ENCODE measurements at regions of chr3 and their contacts with region 1.

Region 1: DNA sequence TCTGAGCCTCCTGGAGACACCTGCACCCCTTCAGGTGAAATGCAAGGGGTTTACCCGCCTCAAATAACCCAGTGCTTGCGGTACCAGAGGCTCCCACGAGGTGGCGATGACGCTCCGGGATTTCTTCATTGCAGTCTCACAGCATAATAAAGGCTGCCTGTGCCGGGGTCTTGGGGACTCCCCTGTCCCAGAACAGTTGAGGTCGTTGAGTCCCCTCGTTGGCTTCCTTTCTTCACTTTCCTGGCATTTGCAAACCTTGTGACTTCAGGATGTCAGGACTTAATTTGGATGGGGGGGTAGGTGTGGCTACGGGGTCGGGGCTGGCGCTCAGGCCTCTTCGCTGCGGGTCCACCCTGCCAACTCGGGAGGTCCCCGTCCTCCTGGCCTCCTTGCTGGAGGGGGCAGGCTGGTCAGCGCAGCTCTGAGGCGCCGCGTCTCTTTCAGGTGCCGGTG is 1.3 kb downstream of the GNAT1 start:
- DNase-seq: peak; percentile 71 to 87
- H3K4me3 ChIP-seq: no peak overlapping the region
- H3K4me3 Mint-ChIP-seq: no peak overlapping the region
- H3K27ac Mint-ChIP-seq: no peak overlapping the region
- H3K4me1 ChIP-seq: peaks cover 20% of the 10 kb centered on the region
- H3K4me1 Mint-ChIP-seq: no peaks in the 10 kb centered on the region
- H3K27me3 ChIP-seq: no peaks in the 10 kb centered on the region
- H3K27me3 Mint-ChIP-seq: no peaks in the 10 kb centered on the region
- CTCF ChIP-seq: peak; percentile 82 to 91

Region 2: DNA sequence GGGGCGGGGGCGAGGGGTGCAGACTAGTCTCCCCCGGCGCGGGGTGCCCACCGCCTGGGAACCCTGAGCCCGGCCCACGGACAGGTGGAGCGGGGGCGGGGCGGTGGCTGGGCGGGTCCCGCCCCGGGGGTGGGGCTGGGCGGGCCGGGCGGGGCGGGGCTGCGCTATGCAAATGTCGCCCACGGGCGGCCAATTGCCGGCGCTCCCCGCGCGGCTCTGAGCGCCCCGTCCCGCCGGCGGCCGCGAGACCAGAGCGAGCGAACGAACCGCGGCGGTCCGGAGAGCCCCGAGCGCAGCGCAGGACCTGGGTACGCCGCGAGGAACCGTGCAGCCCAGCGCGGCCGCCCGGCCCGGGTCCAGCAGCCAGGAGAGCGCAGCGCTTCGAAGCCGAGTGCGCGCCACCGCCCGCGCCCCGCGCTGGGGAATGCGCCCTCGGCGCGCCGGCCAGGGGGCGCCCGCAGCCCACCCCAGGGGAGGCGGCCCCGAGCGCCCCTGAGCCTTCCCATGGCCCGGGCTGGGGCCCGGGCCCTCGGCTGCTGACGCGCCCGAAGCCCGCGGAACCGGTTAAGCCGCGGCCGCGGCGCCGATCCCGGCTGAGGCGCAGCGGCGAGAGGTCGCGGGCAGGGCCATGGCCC is 37.8 kb before region 1 on chr3 and contains the start of gene SEMA3F:
- CTCF ChIA-PET with region 1: no interaction called
- POLR2A ChIA-PET with region 1: no interaction called
- intact Hi-C with region 1: loop called (anchors 1 kb)
- DNase-seq: peak; percentile 67 to 83
- H3K4me3 ChIP-seq: peak within 1 kb of the TSS; percentile 70
- H3K4me3 Mint-ChIP-seq: peak within 1 kb of the TSS; percentile 90
- H3K27ac Mint-ChIP-seq: peak within 1 kb of the TSS; percentile 76
- H3K4me1 ChIP-seq: peaks cover 25% of the 10 kb centered on the region
- H3K4me1 Mint-ChIP-seq: peaks cover 38% of the 10 kb centered on the region
- H3K27me3 ChIP-seq: no peaks in the 10 kb centered on the region
- H3K27me3 Mint-ChIP-seq: no peaks in the 10 kb centered on the region
- CTCF ChIP-seq: peak in 1 of 2 experiments; percentile 7
- total RNA-seq, gene SEMA3F: 11.3 and 16.5 TPM in 2 replicates

Region 3: DNA sequence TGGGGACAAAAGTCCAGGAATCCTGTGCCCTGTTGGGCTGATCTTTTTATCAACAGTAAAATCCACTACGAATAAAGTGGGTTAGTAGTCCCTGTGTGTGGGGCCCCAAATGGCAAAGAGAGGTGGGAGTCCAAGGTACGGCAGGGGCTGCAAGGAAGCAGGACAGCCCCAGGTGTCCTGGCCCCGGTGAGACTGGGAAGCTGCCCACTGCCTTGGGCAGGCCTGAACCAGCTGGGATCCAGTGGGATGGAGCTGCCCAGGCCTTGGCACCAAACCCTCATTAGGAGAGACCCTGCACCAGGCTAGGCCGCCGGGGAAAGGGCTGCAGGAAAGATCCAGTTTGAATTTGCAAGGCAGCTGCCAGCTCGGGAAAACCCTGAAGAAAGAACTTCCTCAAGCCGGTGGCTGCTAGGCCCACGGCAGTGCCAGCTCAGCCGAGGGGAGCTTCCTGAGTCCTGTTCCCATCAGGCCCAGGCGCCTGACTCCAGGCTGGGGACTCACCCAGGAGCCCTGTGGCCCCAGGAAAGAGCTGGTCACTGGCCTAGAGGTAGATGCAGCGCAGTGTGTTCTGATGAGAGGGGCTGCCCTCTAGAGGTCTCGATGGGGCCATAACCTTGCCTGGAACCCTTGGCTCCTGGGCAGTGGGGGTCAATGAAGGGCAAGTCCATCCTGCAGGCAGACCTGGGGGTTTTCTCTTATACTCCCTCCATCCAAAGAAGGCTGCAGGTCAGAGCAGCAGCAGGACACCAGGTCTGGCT is 28.9 kb after region 1 on chr3:
- CTCF ChIA-PET with region 1: interaction called, 100 read pairs
- POLR2A ChIA-PET with region 1: no interaction called
- intact Hi-C with region 1: loop called (anchors 1 kb)
- DNase-seq: no peak
- H3K4me3 ChIP-seq: no peak overlapping the region
- H3K4me3 Mint-ChIP-seq: no peak overlapping the region
- H3K27ac Mint-ChIP-seq: no peak overlapping the region
- H3K4me1 ChIP-seq: no peaks in the 10 kb centered on the region
- H3K4me1 Mint-ChIP-seq: no peaks in the 10 kb centered on the region
- H3K27me3 ChIP-seq: no peaks in the 10 kb centered on the region
- H3K27me3 Mint-ChIP-seq: no peaks in the 10 kb centered on the region
- CTCF ChIP-seq: peak; percentile 36 to 43

Region 4: GRCh38 chr3:50235716-50236496 is 43.2 kb after region 1 on chr3 and contains the start of gene GNAI2:
- CTCF ChIA-PET with region 1: interaction called, 16 read pairs
- POLR2A ChIA-PET with region 1: interaction called, 4 read pairs
- intact Hi-C with region 1: no loop called
- DNase-seq: peak; percentile 98 to 99
- H3K4me3 ChIP-seq: peak within 1 kb of the TSS; percentile 52
- H3K4me3 Mint-ChIP-seq: peak within 1 kb of the TSS; percentile 94
- H3K27ac Mint-ChIP-seq: peak within 1 kb of the TSS; percentile 82
- H3K4me1 ChIP-seq: peaks cover 23% of the 10 kb centered on the region
- H3K4me1 Mint-ChIP-seq: peaks cover 13% of the 10 kb centered on the region
- H3K27me3 ChIP-seq: no peaks in the 10 kb centered on the region
- H3K27me3 Mint-ChIP-seq: no peaks in the 10 kb centered on the region
- CTCF ChIP-seq: no peak
- total RNA-seq, gene GNAI2: 59.3 and 62.0 TPM in 2 replicates

Region 5: GRCh38 chr3:50272911-50273693 is 80.4 kb after region 1 on chr3:
- CTCF ChIA-PET with region 1: interaction called, 4 read pairs
- POLR2A ChIA-PET with region 1: no interaction called
- intact Hi-C with region 1: loop called (anchors 1 kb)
- DNase-seq: peak; percentile 80 to 92
- H3K4me3 ChIP-seq: no peak overlapping the region
- H3K4me3 Mint-ChIP-seq: no peak overlapping the region
- H3K27ac Mint-ChIP-seq: peak overlapping the region; percentile 45
- H3K4me1 ChIP-seq: peaks cover 55% of the 10 kb centered on the region
- H3K4me1 Mint-ChIP-seq: peaks cover 33% of the 10 kb centered on the region
- H3K27me3 ChIP-seq: no peaks in the 10 kb centered on the region
- H3K27me3 Mint-ChIP-seq: no peaks in the 10 kb centered on the region
- CTCF ChIP-seq: peak; percentile 92 to 97

Region 6: DNA sequence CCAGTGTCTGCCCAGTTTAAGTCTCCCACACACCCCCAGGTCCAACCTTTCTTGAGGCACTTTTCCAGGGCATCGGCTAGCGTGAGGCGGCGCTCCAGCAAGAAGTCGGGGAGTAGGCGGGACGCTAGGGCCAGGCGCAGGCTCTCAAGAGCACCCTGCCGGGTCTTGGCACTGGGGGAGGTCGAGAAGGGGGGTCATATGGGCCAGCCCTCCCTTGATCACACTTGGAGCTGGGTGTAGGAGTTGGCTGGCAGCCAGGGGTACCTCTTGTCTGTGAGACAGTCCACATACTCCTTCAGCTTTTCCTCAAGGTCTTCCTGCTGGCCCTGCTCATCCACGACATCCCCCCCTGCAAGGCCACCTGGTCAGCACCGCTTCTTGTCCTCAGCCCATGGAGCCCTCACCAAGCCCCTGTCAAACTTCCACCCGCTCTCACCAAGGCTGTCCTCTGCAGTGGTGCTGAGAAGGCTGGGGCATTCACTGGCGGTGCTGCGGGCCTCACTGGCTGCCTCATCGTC is 97.5 kb after region 1 on chr3:
- CTCF ChIA-PET with region 1: no interaction called
- POLR2A ChIA-PET with region 1: no interaction called
- intact Hi-C with region 1: no loop called
- DNase-seq: no peak
- H3K4me3 ChIP-seq: no peak overlapping the region
- H3K4me3 Mint-ChIP-seq: no peak overlapping the region
- H3K27ac Mint-ChIP-seq: no peak overlapping the region
- H3K4me1 ChIP-seq: peaks cover 7% of the 10 kb centered on the region
- H3K4me1 Mint-ChIP-seq: peaks cover 16% of the 10 kb centered on the region
- H3K27me3 ChIP-seq: no peaks in the 10 kb centered on the region
- H3K27me3 Mint-ChIP-seq: no peaks in the 10 kb centered on the region
- CTCF ChIP-seq: no peak

Region 7: DNA sequence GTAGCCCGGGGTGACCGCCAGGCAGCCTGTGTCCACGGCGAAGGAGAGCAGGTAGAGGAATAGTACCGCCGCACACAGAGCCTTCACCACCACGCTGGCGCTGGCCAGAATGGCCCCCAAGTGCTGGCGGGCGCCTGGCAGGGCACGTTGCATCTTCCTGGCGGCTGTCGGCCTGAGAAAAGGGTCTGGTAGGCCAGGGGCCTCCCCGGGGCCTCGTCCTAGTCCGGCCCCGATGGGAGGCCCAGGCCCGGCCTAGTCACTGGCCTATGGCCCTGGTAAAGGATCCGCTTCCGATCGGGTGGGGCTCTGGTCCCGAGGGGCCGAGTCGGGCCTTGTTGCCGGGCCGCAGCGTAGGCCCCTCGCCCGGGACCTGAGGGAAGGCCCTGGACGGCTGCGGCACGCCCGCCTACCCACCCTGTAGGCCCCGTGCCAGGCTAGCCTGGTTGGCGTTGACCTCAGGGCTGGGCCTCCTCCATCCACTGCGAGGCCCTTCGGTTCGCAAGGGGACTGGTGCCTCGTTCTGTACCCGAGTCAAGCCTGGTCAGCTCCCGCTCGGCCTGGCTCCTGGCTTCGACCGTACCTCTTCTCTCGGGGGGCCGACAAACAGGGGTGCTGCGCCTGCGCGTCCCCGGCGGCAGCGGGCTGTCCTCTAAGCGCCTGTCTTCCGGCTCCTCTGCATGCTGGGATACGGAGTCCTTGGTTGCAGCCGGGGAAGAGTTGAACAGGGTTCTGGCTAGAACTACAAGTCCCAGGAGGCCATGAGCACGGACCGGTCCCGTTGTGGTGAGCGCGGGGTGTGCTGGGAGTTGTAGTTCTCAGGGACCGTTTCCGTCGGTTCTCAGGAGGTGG is 166.4 kb after region 1 on chr3 and contains the start of gene TMEM115:
- CTCF ChIA-PET with region 1: no interaction called
- POLR2A ChIA-PET with region 1: no interaction called
- intact Hi-C with region 1: no loop called
- DNase-seq: peak; percentile 94 to 97
- H3K4me3 ChIP-seq: peak within 1 kb of the TSS; percentile 61
- H3K4me3 Mint-ChIP-seq: peak within 1 kb of the TSS; percentile 92
- H3K27ac Mint-ChIP-seq: peak within 1 kb of the TSS; percentile 86
- H3K4me1 ChIP-seq: peaks cover 25% of the 10 kb centered on the region
- H3K4me1 Mint-ChIP-seq: peaks cover 4% of the 10 kb centered on the region
- H3K27me3 ChIP-seq: no peaks in the 10 kb centered on the region
- H3K27me3 Mint-ChIP-seq: no peaks in the 10 kb centered on the region
- CTCF ChIP-seq: no peak
- total RNA-seq, gene TMEM115: 23.9 TPM in 2 replicates